ENCODE measurements at regions of chr5 and their contacts with region 1.

Region 1: GRCh38 chr5:141412854-141413539 is at the start of gene PCDHGA10:
- DNase-seq: peak; percentile 53 to 61 (median 59)
- H3K4me3 ChIP-seq: peak within 1 kb of the TSS; percentile 14 to 51
- H3K4me3 Mint-ChIP-seq: peak within 1 kb of the TSS; percentile 81 to 92 (median 89)
- H3K27ac ChIP-seq: no peak within 1 kb of the TSS
- H3K27ac Mint-ChIP-seq: peak within 1 kb of the TSS in 5 of 7 donors; percentile 30 to 87 (median 69)
- H3K4me1 ChIP-seq: peaks cover 8% of the 10 kb centered on the region
- H3K4me1 Mint-ChIP-seq: peaks cover 11 to 20% (median 15%) of the 10 kb centered on the region in 4 donors
- H3K27me3 ChIP-seq: peaks cover 22% of the 10 kb centered on the region
- H3K27me3 Mint-ChIP-seq: peaks cover 36 to 56% of the 10 kb centered on the region in 2 donors
- total RNA-seq, gene PCDHGA10: 0.25 to 0.35 TPM

Region 2: DNA sequence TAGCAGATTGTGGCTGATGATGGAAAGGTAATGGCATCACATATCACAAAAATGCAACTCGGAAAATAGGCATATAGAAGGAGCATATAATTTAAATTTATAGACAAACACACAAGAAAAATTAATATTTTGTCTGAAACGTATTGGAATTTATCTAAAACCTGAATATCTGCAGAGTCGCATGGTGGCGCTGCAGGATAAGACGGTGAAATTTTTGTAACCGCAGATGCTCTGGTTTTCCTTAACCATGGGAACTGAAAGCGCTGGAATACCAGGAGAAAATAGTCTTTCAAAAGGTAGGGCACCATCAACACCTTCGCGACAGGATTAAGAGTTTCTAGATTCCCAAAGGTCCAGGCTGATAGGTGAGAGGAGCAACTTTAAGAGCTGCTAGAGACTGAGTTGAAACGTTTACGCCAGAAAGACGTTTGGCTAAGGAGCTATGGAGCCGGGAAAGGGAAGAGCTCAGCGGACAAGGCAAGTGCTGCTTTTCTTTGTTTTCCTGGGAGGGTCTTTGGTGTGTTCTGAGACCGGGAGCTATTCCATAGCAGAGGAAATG is 178.8 kb before region 1 on chr5:
- CTCF ChIA-PET with region 1: no interaction called
- POLR2A ChIA-PET with region 1: no interaction called
- intact Hi-C with region 1: no loop called
- DNase-seq: no peak
- H3K4me3 ChIP-seq: no peak overlapping the region
- H3K4me3 Mint-ChIP-seq: peak overlapping the region in 2 of 8 donors; percentile 9 to 13
- H3K27ac ChIP-seq: no peak overlapping the region
- H3K27ac Mint-ChIP-seq: no peak overlapping the region
- H3K4me1 ChIP-seq: no peaks in the 10 kb centered on the region
- H3K4me1 Mint-ChIP-seq: no peaks in the 10 kb centered on the region
- H3K27me3 ChIP-seq: peaks cover 6% of the 10 kb centered on the region
- H3K27me3 Mint-ChIP-seq: peaks cover 18 to 32% of the 10 kb centered on the region in 2 donors

Region 3: DNA sequence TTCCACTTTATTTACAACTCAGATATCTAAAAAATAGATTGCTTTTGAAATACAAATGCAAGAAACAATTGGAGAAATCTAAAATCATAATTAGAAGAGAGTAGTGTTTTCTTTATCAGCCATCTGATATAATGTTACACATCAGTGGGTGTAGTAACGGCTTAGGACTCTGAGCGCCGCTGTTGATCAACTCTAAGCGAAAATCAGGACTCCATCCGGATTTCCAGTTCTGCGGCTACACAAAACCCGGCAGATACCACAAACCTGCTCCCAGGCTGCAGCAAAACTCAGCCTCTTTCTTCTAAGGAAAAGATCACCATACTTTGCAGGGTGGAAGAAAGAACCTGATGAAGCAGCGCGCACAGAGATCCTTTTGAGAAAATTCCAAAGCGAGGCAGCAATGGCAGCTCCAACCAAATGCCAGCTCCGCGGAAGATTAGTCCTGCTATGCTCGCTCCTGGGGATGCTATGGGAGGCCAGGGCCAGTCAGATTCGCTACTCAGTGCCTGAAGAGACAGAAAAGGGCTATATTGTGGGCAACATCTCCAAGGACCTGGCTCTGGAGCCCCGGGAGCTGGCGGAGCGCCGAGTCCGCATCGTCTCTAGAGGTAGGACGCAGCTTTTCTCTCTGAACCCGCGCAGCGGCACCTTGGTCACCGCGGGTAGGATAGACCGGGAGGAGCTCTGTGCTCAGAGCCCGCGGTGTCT is 10.3 kb before region 1 on chr5 and contains the start of gene PCDHGA9:
- CTCF ChIA-PET with region 1: interaction called, 16 read pairs
- POLR2A ChIA-PET with region 1: no interaction called
- intact Hi-C with region 1: no loop called
- DNase-seq: no peak
- H3K4me3 ChIP-seq: no peak within 1 kb of the TSS
- H3K4me3 Mint-ChIP-seq: peak within 1 kb of the TSS; percentile 21 to 72 (median 63)
- H3K27ac ChIP-seq: no peak within 1 kb of the TSS
- H3K27ac Mint-ChIP-seq: peak within 1 kb of the TSS in 2 of 7 donors; percentile 51 to 60
- H3K4me1 ChIP-seq: no peaks in the 10 kb centered on the region
- H3K4me1 Mint-ChIP-seq: peaks cover 0 to 4% (median 0%) of the 10 kb centered on the region in 4 donors
- H3K27me3 ChIP-seq: peaks cover 6% of the 10 kb centered on the region
- H3K27me3 Mint-ChIP-seq: peaks cover 56 to 61% of the 10 kb centered on the region in 2 donors
- total RNA-seq, gene PCDHGA9: 0.17 to 0.25 TPM

Region 4: DNA sequence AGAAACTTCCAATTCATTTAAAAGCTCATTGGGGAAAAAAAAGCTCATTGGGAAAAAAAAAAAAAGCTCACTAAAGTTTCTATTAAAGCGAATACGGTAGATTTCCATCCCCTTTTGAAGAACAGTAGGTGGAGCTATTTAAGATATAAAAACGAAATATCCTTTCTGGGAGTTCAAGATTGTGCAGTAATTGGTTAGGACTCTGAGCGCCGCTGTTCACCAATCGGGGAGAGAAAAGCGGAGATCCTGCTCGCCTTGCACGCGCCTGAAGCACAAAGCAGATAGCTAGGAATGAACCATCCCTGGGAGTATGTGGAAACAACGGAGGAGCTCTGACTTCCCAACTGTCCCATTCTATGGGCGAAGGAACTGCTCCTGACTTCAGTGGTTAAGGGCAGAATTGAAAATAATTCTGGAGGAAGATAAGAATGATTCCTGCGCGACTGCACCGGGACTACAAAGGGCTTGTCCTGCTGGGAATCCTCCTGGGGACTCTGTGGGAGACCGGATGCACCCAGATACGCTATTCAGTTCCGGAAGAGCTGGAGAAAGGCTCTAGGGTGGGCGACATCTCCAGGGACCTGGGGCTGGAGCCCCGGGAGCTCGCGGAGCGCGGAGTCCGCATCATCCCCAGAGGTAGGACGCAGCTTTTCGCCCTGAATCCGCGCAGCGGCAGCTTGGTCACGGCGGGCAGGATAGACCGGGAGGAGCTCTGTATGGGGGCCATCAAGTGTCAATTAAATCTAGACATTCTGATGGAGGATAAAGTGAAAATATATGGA is 17.5 kb after region 1 on chr5 and contains the start of gene PCDHGA12:
- CTCF ChIA-PET with region 1: interaction called, 14 read pairs
- POLR2A ChIA-PET with region 1: no interaction called
- intact Hi-C with region 1: no loop called
- DNase-seq: no peak
- H3K4me3 ChIP-seq: no peak within 1 kb of the TSS
- H3K4me3 Mint-ChIP-seq: peak within 1 kb of the TSS; percentile 40 to 86 (median 58)
- H3K27ac ChIP-seq: no peak within 1 kb of the TSS
- H3K27ac Mint-ChIP-seq: peak within 1 kb of the TSS in 5 of 7 donors; percentile 41 to 81 (median 45)
- H3K4me1 ChIP-seq: no peaks in the 10 kb centered on the region
- H3K4me1 Mint-ChIP-seq: peaks cover 5 to 17% (median 6%) of the 10 kb centered on the region in 4 donors
- H3K27me3 ChIP-seq: peaks cover 14% of the 10 kb centered on the region
- H3K27me3 Mint-ChIP-seq: peaks cover 43 to 50% of the 10 kb centered on the region in 2 donors
- total RNA-seq, gene PCDHGA12: 0.11 to 0.17 TPM

Region 5: GRCh38 chr5:141524604-141525597 is 111.9 kb after region 1 on chr5:
- CTCF ChIA-PET with region 1: interaction called, 13 read pairs
- POLR2A ChIA-PET with region 1: no interaction called
- intact Hi-C with region 1: loop called (anchors 1 kb)
- DNase-seq: peak; percentile 46 to 62 (median 51)
- H3K4me3 ChIP-seq: no peak overlapping the region
- H3K4me3 Mint-ChIP-seq: no peak overlapping the region
- H3K27ac ChIP-seq: no peak overlapping the region
- H3K27ac Mint-ChIP-seq: peak overlapping the region in 5 of 7 donors; percentile 26 to 72 (median 57)
- H3K4me1 ChIP-seq: peaks cover 15% of the 10 kb centered on the region
- H3K4me1 Mint-ChIP-seq: peaks cover 11 to 28% (median 21%) of the 10 kb centered on the region in 4 donors
- H3K27me3 ChIP-seq: no peaks in the 10 kb centered on the region
- H3K27me3 Mint-ChIP-seq: no peaks in the 10 kb centered on the region

Measured in CD4-positive, alpha-beta memory T cell (primary cell).